ENCODE measurements at regions of chr1 and their contacts with region 1.

Region 1: GRCh38 chr1:204763706-204764427 is 78.3 kb upstream of the LRRN2 start:
- DNase-seq: peak; percentile 92
- ATAC-seq: peak; percentile 99
- H3K4me3 Mint-ChIP-seq: no peak overlapping the region
- H3K27ac Mint-ChIP-seq: no peak overlapping the region
- H3K4me1 Mint-ChIP-seq: peaks cover 10% of the 10 kb centered on the region
- H3K27me3 Mint-ChIP-seq: peaks cover 4% of the 10 kb centered on the region
- CTCF ChIP-seq: peak; percentile 87

Region 2: GRCh38 chr1:204560590-204561150 is 203.2 kb before region 1 on chr1:
- CTCF ChIA-PET with region 1: interaction called, 98 read pairs
- POLR2A ChIA-PET with region 1: interaction called, 3 read pairs
- intact Hi-C with region 1: no loop called
- DNase-seq: no peak
- ATAC-seq: no peak
- H3K4me3 Mint-ChIP-seq: no peak overlapping the region
- H3K27ac Mint-ChIP-seq: peak overlapping the region; percentile 9
- H3K4me1 Mint-ChIP-seq: peaks cover 55% of the 10 kb centered on the region
- H3K27me3 Mint-ChIP-seq: no peaks in the 10 kb centered on the region
- CTCF ChIP-seq: no peak

Region 3: DNA sequence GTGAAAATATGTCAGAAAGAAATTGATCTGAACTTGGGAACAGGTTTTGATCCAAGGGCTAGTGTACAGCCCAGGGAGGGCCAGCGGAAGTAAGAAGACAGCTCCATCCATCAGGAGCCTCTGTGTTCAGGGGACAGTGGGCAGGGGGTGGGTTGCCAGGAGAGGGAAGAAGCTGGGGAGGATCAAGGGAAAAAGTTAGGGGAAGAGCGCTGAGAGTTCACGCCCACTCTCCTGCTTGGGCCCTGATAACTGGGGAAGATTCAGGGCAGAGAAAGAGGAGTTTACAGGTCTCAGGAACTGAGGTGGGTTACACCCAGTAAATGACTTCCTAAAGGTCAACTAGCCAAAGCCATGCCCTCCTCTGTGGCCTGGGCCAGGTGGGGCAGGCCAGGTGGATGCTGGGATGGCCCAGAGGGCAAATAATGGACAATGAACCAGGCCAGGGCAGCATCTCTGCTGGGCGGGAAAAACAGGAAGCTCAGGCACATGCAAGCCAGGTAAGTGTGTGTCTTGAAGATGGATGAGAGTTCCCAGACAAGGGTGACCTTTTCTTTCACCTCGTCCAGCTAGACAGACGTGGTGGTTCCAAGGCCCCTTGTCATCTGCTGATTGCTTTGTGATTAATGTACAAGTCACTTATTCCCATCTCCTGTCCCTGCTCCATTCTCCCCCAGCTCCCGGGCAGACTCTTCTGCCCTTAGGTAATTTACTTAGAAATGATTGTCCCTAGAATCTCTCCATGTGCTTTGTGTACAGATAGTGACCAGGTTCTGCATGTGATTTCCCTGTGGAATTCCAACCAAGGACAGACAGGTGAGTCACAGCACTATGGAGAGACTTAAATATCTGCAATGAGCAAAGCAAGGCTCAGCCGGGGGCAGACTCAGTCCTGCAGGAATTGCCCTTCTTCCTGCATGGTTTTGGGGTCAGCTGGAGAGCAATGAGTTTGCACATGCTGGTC is 190.7 kb before region 1 on chr1:
- CTCF ChIA-PET with region 1: interaction called, 98 read pairs
- POLR2A ChIA-PET with region 1: interaction called, 5 read pairs
- intact Hi-C with region 1: no loop called
- DNase-seq: no peak
- ATAC-seq: no peak
- H3K4me3 Mint-ChIP-seq: no peak overlapping the region
- H3K27ac Mint-ChIP-seq: no peak overlapping the region
- H3K4me1 Mint-ChIP-seq: peaks cover 6% of the 10 kb centered on the region
- H3K27me3 Mint-ChIP-seq: no peaks in the 10 kb centered on the region
- CTCF ChIP-seq: no peak

Region 4: GRCh38 chr1:204701229-204701628 is 62.6 kb before region 1 on chr1:
- CTCF ChIA-PET with region 1: no interaction called
- POLR2A ChIA-PET with region 1: no interaction called
- intact Hi-C with region 1: no loop called
- DNase-seq: no peak
- ATAC-seq: no peak
- H3K4me3 Mint-ChIP-seq: no peak overlapping the region
- H3K27ac Mint-ChIP-seq: no peak overlapping the region
- H3K4me1 Mint-ChIP-seq: peaks cover 5% of the 10 kb centered on the region
- H3K27me3 Mint-ChIP-seq: no peaks in the 10 kb centered on the region
- CTCF ChIP-seq: no peak

Region 5: DNA sequence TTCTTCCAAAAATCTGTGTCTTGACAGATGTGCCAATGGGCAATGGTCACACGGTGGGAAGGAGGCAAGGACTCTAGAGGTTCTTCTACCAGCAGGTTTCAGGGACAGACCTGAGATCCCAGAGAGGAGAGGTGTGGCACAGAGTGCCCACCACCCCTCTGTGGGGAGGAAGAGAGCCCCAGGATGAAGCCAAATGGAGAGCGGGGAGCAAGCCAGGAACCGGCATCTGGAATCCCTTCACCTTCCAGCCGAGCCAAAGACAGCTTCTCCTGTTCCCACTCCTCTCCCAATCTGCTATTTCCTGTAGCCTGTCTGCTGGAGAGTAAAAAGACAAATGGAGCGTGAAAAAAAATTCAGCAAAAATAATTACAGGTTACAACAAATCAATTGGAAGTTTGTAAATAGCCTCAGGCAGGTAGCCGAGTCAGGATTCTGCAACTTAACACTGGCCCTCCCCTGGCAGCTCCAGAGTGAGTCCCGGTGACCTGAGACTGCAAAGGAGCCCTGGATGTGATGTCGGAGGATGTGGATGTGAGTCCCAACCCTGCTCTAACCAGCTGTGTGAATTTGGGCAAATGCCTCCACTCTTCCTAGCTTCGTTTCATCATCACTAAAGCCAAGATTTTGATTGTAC is 32.9 kb before region 1 on chr1:
- CTCF ChIA-PET with region 1: interaction called, 10 read pairs
- POLR2A ChIA-PET with region 1: no interaction called
- intact Hi-C with region 1: no loop called
- DNase-seq: no peak
- ATAC-seq: no peak
- H3K4me3 Mint-ChIP-seq: no peak overlapping the region
- H3K27ac Mint-ChIP-seq: no peak overlapping the region
- H3K4me1 Mint-ChIP-seq: peaks cover 3% of the 10 kb centered on the region
- H3K27me3 Mint-ChIP-seq: peaks cover 13% of the 10 kb centered on the region
- CTCF ChIP-seq: no peak

Region 6: GRCh38 chr1:204791453-204792353 is 27.8 kb after region 1 on chr1:
- CTCF ChIA-PET with region 1: interaction called, 17 read pairs
- POLR2A ChIA-PET with region 1: interaction called, 3 read pairs
- intact Hi-C with region 1: no loop called
- DNase-seq: peak; percentile 93
- ATAC-seq: peak; percentile 94
- H3K4me3 Mint-ChIP-seq: no peak overlapping the region
- H3K27ac Mint-ChIP-seq: no peak overlapping the region
- H3K4me1 Mint-ChIP-seq: peaks cover 2% of the 10 kb centered on the region
- H3K27me3 Mint-ChIP-seq: peaks cover 28% of the 10 kb centered on the region
- CTCF ChIP-seq: peak; percentile 91